MCF 10A (cell line): ENCODE measurements at regions of chrX and their contacts with region 1.

Region 1: GRCh38 chrX:71283403-71284143 is at the start of gene NONO:
- DNase-seq: peak; percentile 97
- H3K4me3 Mint-ChIP-seq: peak within 1 kb of the TSS; percentile 96
- H3K27ac Mint-ChIP-seq: peak within 1 kb of the TSS; percentile 98
- H3K4me1 Mint-ChIP-seq: no peaks in the 10 kb centered on the region
- H3K27me3 Mint-ChIP-seq: peaks cover 10% of the 10 kb centered on the region
- CTCF ChIP-seq: no peak
- total RNA-seq, gene NONO: 255 and 292 TPM in 2 replicates

Region 2: DNA sequence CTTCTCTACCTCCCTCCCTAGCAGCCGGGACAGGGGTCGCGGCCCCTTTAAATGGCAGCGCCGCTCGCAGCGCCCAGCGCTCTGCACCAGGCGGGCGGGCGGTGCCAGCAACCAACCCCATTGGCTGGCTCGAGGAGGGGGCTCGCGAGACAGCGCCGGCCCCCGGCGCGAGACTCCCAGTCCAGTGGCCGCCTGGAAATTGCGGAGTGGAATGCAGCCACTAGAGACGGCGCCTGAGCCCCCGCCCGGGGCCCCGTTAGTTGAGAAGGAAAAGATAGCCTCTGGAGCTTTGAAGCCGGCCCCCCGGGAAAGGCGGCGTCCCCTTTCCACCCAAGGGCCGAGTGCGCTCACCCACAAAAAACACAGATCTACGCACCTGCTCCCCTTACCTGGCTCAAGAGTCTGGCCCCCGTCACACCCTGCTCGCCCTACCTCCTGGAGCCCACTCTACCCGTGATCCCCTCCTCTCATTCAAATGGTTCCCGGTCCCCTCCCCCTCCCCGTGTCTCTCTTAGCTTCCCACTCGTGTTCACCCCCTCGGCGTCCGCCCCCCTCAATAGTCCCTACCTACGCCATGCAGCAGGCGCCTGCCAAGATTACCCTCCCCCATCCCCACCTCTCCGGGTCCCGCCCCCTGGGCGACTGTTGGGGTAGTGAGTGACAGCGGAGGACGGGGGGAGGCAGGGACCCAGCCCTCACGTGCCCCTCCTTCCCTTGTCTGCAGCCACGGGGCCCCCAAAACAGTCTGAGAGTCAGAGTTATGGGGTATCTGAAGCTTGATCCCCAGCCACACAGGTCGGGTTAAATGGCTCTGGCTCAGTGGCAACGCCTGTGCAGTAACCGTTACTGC is 29.3 kb before region 1 on chrX and contains the start of gene ZMYM3:
- CTCF ChIA-PET with region 1: interaction called, 4 read pairs
- POLR2A ChIA-PET with region 1: interaction called, 64 read pairs
- intact Hi-C with region 1: no loop called
- DNase-seq: peak; percentile 83
- H3K4me3 Mint-ChIP-seq: peak within 1 kb of the TSS; percentile 92
- H3K27ac Mint-ChIP-seq: peak within 1 kb of the TSS; percentile 82
- H3K4me1 Mint-ChIP-seq: peaks cover 8% of the 10 kb centered on the region
- H3K27me3 Mint-ChIP-seq: peaks cover 10% of the 10 kb centered on the region
- CTCF ChIP-seq: no peak
- total RNA-seq, gene ZMYM3: 7.9 and 8.4 TPM in 2 replicates

Region 3: GRCh38 chrX:71296806-71297205 is 13.2 kb after region 1 on chrX:
- CTCF ChIA-PET with region 1: interaction called, 3 read pairs
- POLR2A ChIA-PET with region 1: interaction called, 12 read pairs
- intact Hi-C with region 1: no loop called
- DNase-seq: no peak
- H3K4me3 Mint-ChIP-seq: no peak overlapping the region
- H3K27ac Mint-ChIP-seq: no peak overlapping the region
- H3K4me1 Mint-ChIP-seq: no peaks in the 10 kb centered on the region
- H3K27me3 Mint-ChIP-seq: peaks cover 35% of the 10 kb centered on the region
- CTCF ChIP-seq: no peak

Region 4: DNA sequence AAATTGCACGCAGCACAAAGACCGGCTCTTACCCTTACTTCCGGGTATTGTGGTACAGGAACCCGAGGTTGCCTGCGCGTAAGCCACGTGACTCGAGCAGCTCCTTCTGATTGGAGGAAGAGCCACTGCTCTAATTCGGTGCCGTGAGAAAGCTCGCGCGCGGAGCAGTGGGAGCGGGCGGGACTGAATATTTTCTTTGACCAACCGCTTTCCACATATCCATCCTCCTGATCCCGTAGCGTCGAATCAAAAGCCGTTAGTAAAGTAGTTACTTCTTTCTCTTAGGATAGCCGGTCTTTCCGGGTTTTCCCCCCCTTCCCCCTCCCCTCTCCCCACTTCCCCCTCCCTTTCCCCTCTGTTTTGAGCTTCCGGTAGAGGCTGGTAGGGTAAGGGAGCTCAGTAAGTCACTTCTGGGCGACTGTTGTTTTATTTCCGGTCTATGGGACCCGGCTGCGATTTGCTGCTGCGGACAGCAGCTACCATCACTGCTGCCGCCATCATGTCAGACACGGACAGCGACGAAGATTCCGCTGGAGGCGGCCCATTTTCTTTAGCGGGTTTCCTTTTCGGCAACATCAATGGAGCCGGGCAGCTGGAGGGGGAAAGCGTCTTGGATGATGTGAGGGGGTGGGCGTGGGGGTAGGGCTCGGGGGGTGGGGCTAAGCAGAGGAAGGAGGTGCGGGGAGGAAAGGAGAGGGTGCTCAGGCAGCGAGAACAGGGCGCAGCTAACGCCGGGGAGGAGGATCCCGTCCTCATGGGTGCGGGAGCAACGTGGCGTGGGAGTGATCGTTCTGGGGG is 82.5 kb after region 1 on chrX and contains the start of gene TAF1:
- CTCF ChIA-PET with region 1: no interaction called
- POLR2A ChIA-PET with region 1: interaction called, 44 read pairs
- intact Hi-C with region 1: no loop called
- DNase-seq: peak; percentile 95
- H3K4me3 Mint-ChIP-seq: peak within 1 kb of the TSS; percentile 96
- H3K27ac Mint-ChIP-seq: peak within 1 kb of the TSS; percentile 97
- H3K4me1 Mint-ChIP-seq: peaks cover 5% of the 10 kb centered on the region
- H3K27me3 Mint-ChIP-seq: peaks cover 4% of the 10 kb centered on the region
- CTCF ChIP-seq: no peak
- total RNA-seq, gene TAF1: 31.9 and 34.9 TPM in 2 replicates